ENCODE measurements at regions of chr6 and their contacts with region 1.

Region 1: GRCh38 chr6:26223650-26224546 is 136.7 kb downstream of the HFE start:
- DNase-seq: peak; percentile 65
- H3K4me3 Mint-ChIP-seq: no peak overlapping the region
- H3K27ac Mint-ChIP-seq: no peak overlapping the region
- H3K4me1 Mint-ChIP-seq: peaks cover 25% of the 10 kb centered on the region
- H3K27me3 Mint-ChIP-seq: no peaks in the 10 kb centered on the region

Region 2: DNA sequence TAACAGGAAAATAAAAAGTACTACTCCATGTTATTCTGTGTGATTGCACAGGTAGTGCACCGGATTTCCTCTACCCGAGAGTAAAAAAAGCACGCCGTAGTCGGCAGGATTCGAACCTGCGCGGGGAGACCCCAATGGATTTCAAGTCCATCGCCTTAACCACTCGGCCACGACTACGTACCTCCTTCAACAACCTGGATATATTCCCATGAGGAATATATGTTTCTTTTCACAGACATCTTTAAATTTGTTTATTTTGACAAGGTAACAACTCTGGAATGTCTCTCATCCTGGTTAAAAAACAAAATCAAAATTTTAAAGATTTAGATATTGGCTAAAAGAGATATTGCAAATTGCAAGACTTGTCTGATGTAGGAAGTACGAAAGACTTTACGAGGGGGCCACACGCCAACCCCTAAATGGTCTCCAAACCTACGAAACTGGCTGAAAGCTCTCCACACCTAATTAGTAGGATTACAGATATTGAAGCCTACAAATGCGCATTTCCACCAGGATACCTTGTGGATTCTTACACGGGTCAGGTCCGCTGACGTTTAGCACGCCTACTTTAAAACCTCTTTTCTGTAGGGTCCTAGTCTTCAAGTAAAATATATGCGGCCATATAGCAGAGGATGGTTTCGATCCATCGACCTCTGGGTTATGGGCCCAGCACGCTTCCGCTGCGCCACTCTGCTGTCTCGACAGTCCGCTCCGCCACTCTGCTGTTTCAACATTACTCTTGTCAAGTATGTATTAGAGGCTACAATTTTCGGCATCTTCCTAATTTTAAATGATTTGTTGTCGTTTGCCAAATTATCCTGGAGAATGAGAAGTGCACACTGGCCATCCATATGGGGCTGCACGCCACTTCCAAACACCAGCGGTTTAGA is 88.8 kb after region 1 on chr6:
- intact Hi-C with region 1: loop called (anchors 5 kb)
- DNase-seq: peak; percentile 79
- H3K4me3 Mint-ChIP-seq: peak overlapping the region; percentile 85
- H3K27ac Mint-ChIP-seq: peak overlapping the region; percentile 82
- H3K4me1 Mint-ChIP-seq: peaks cover 50% of the 10 kb centered on the region
- H3K27me3 Mint-ChIP-seq: no peaks in the 10 kb centered on the region